Aorta (tissue), 5 donors: ENCODE measurements at regions of chr4 and their contacts with region 1.

Region 1: GRCh38 chr4:10157478-10158332 is 41.1 kb upstream of the WDR1 start:
- DNase-seq: no peak
- ATAC-seq: peak; percentile 75
- H3K4me3 ChIP-seq: no peak overlapping the region
- H3K27ac ChIP-seq: no peak overlapping the region
- H3K4me1 ChIP-seq: no peaks in the 10 kb centered on the region
- H3K27me3 ChIP-seq: no peaks in the 10 kb centered on the region

Region 2: GRCh38 chr4:10140866-10141759 is 16.6 kb before region 1 on chr4:
- intact Hi-C with region 1: no loop called
- DNase-seq: no peak
- ATAC-seq: no peak
- H3K4me3 ChIP-seq: no peak overlapping the region
- H3K27ac ChIP-seq: no peak overlapping the region
- H3K4me1 ChIP-seq: no peaks in the 10 kb centered on the region
- H3K27me3 ChIP-seq: no peaks in the 10 kb centered on the region

Region 3: DNA sequence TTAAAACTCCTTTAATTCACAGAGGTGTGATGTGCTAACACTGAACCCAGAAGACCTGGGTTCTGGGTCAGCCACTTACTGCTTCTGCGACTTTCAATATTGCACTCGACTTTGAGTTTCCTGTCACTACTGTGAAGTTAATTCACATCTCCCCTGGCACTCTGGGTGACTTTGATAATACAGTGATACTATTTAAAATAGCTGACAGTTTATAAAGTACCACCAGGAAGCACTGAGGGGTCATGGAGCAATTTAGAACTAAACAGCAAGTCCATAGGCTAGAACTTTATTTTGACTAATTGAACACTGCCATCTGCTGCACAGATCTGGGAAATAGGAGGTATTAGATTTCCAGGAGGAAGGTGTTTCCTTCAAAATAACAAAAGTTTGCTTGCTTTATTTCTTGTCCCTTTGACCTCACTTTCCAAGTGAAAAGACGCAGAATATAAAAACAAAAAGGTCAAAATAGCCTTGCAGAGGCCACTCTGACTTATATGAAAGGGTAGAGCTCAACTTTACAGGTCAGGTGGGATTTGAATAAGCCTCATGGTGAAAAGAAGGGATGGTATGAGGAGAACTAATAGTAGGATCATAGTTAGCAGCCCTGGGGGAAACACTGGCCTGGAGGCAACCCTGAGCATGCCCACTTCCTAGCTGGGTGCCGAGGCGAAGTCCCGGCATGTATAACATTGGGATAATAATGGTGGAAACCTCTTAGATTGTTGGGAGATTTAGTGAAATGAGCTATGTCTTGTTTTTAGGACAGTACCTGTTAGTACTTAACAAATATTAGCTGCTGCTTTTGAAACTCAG is 246.1 kb after region 1 on chr4:
- intact Hi-C with region 1: loop called (anchors 5 kb)
- DNase-seq: no peak
- ATAC-seq: no peak
- H3K4me3 ChIP-seq: no peak overlapping the region
- H3K27ac ChIP-seq: no peak overlapping the region
- H3K4me1 ChIP-seq: no peaks in the 10 kb centered on the region
- H3K27me3 ChIP-seq: no peaks in the 10 kb centered on the region

Region 4: GRCh38 chr4:10554694-10555093 is 397.0 kb after region 1 on chr4:
- intact Hi-C with region 1: loop called (anchors 5 kb)
- DNase-seq: no peak
- ATAC-seq: peak; percentile 84
- H3K4me3 ChIP-seq: no peak overlapping the region
- H3K27ac ChIP-seq: no peak overlapping the region
- H3K4me1 ChIP-seq: no peaks in the 10 kb centered on the region
- H3K27me3 ChIP-seq: peaks cover 0 to 2% of the 10 kb centered on the region in 2 donors